SK-N-SH (cell line): ENCODE measurements at regions of chr15 and their contacts with region 1.

Region 1: GRCh38 chr15:78618490-78618934 is 2.3 kb downstream of the CHRNA3 start:
- DNase-seq: peak; percentile 89
- H3K4me3 ChIP-seq: peak overlapping the region; percentile 16 to 59; a peak in 2 of 4 replicates
- H3K27ac ChIP-seq: peak overlapping the region; percentile 30 to 99; a peak in 3 of 4 replicates
- H3K4me1 ChIP-seq: peaks cover 4 to 43% of the 10 kb centered on the region in 2 experiments; a peak in 2 of 4 replicates
- H3K27me3 ChIP-seq: peaks cover 36% of the 10 kb centered on the region
- CTCF ChIP-seq: peak; percentile 93
- EP300 ChIP-seq: peak; percentile 91 to 93
- RAD21 ChIP-seq: peak; percentile 94

Region 2: GRCh38 chr15:78506971-78507830 is 111.3 kb before region 1 on chr15 and contains the start of gene HYKK:
- CTCF ChIA-PET with region 1: no interaction called
- POLR2A ChIA-PET with region 1: no interaction called
- DNase-seq: peak; percentile 96
- H3K4me3 ChIP-seq: peak within 1 kb of the TSS; percentile 74 to 79
- H3K27ac ChIP-seq: peak within 1 kb of the TSS; percentile 2 to 61; a peak in 2 of 4 replicates
- H3K4me1 ChIP-seq: peaks cover 3 to 8% of the 10 kb centered on the region in 2 experiments; a peak in 1 of 4 replicates
- H3K27me3 ChIP-seq: no peaks in the 10 kb centered on the region
- CTCF ChIP-seq: no peak
- EP300 ChIP-seq: no peak
- RAD21 ChIP-seq: no peak
- polyA plus RNA-seq, gene HYKK: 2.2 and 2.8 TPM in 2 replicates

Region 3: DNA sequence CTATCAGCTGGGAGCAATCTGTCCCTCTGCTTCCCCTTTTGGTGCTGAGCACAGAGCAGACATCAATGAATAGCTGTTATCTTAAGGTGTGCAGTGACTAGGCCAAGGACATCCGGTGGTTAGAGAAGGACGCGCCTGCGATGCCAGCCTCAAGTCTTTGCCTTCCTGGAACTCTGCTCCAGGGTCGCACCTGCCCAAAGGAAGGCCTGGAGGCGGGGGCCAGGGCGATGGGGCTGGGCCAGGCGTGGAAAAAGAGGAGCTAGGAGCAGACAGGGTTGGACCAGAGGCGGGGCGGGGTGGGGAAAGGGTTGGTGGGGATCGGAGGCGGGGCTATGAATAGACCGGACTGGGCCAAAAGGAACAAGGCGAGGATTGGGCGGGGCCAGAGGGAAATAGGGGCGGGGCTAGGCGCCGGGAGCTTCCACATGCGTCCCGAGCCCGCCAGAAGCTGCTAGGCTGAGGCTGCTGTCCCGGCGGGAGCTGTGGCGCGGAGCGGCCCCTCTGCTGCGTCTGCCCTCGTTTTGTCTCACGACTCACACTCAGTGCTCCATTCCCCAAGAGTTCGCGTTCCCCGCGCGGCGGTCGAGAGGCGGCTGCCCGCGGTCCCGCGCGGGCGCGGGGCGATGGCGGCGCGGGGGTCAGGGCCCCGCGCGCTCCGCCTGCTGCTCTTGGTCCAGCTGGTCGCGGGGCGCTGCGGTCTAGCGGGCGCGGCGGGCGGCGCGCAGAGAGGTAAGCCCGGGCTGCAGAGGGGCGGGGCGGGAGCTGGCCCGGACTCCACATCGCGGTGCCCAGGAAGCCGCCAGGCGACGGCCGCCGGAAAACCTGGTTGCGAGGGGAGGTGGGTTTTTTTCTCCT is 53.2 kb before region 1 on chr15 and contains the start of gene CHRNA5:
- CTCF ChIA-PET with region 1: interaction called, 9 read pairs
- POLR2A ChIA-PET with region 1: interaction called, 10 read pairs
- DNase-seq: peak; percentile 94
- H3K4me3 ChIP-seq: peak within 1 kb of the TSS; percentile 73 to 80
- H3K27ac ChIP-seq: peak within 1 kb of the TSS; percentile 48 to 90
- H3K4me1 ChIP-seq: peaks cover 0 to 13% of the 10 kb centered on the region in 2 experiments; a peak in 2 of 4 replicates
- H3K27me3 ChIP-seq: no peaks in the 10 kb centered on the region
- CTCF ChIP-seq: no peak
- EP300 ChIP-seq: peak in 1 of 2 experiments; percentile 65; a peak in 1 of 4 replicates
- RAD21 ChIP-seq: no peak
- polyA plus RNA-seq, gene CHRNA5: 5.3 and 5.5 TPM in 2 replicates

Region 4: DNA sequence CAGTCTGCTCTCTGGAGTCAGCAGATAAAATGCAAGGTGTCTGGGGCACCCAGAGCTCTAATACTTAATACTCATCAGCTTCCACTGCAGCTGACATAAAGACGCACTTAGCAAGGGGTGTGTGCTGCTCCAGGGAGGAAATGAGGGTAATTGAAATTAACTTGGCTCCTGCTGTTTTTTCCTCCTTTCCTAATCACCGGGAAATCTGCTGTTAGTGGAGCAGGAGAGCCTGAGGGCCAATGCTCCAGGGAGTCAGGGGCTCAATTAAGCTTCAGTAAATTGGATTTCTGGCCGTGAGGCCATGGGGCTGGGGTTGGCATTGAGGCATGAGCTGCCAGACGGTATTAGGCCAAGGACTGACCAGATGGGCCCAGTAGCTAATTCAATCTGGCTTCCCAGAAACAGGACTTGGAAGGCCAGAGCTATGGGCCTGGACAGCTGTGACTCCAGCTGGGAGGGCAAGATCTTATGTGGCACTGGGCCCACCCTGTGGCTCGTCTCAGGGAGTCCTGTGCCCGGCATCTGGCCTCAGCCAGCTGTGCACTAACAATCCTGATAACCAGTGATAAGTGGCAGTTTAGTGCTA is 53.2 kb after region 1 on chr15:
- CTCF ChIA-PET with region 1: interaction called, 9 read pairs
- POLR2A ChIA-PET with region 1: interaction called, 55 read pairs
- DNase-seq: peak; percentile 88
- H3K4me3 ChIP-seq: no peak overlapping the region
- H3K27ac ChIP-seq: peak overlapping the region in 1 of 2 experiments; percentile 99; a peak in 2 of 4 replicates
- H3K4me1 ChIP-seq: peaks cover 0 to 65% of the 10 kb centered on the region in 2 experiments; a peak in 2 of 4 replicates
- H3K27me3 ChIP-seq: no peaks in the 10 kb centered on the region
- CTCF ChIP-seq: no peak
- EP300 ChIP-seq: peak; percentile 54 to 100; a peak in 3 of 4 replicates
- RAD21 ChIP-seq: peak; percentile 35

Region 5: GRCh38 chr15:78691167-78691872 is 72.8 kb after region 1 on chr15:
- CTCF ChIA-PET with region 1: interaction called, 13 read pairs
- POLR2A ChIA-PET with region 1: interaction called, 3 read pairs
- DNase-seq: no peak
- H3K4me3 ChIP-seq: no peak overlapping the region
- H3K27ac ChIP-seq: peak overlapping the region in 1 of 2 experiments; percentile 76; a peak in 2 of 4 replicates
- H3K4me1 ChIP-seq: peaks cover 0 to 34% of the 10 kb centered on the region in 2 experiments; a peak in 1 of 4 replicates
- H3K27me3 ChIP-seq: peaks cover 6% of the 10 kb centered on the region; the same call in 1 of the 2 replicates
- CTCF ChIP-seq: no peak
- EP300 ChIP-seq: no peak
- RAD21 ChIP-seq: no peak

Region 6: DNA sequence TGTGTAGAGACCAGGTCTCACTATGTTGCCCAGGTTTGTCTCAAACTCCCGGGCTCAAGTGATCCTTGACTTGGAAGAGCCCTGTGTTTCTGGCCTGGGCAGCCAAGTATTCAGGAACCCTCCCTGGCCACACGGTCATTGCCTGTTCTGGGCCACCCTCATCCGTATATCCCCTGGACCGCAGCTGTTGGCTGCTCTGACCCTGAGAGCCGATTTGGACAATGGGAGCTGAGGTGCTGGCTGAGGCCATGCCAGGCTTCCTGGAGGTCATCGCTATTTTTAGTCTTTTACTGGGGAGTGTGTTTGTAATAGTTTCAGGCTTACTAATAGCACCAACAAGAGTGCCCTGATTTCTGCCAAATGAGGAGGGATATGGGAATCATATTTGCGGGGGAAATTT is 132.1 kb after region 1 on chr15:
- CTCF ChIA-PET with region 1: interaction called, 8 read pairs
- POLR2A ChIA-PET with region 1: interaction called, 18 read pairs
- DNase-seq: no peak
- H3K4me3 ChIP-seq: no peak overlapping the region
- H3K27ac ChIP-seq: peak overlapping the region in 1 of 2 experiments; percentile 45; a peak in 1 of 4 replicates
- H3K4me1 ChIP-seq: peaks cover 0 to 49% of the 10 kb centered on the region in 2 experiments; a peak in 2 of 4 replicates
- H3K27me3 ChIP-seq: no peaks in the 10 kb centered on the region
- CTCF ChIP-seq: no peak
- EP300 ChIP-seq: no peak
- RAD21 ChIP-seq: no peak